Ovary (tissue), 10 donors: ENCODE measurements at regions of chr4 and their contacts with region 1.

Region 1: GRCh38 chr4:83012687-83013419 is 2.2 kb upstream of the LIN54 start:
- DNase-seq: peak; percentile 96 to 99 (median 98)
- H3K4me3 ChIP-seq: peak overlapping the region; percentile 81
- H3K27ac ChIP-seq: peak overlapping the region in 1 of 2 donors; percentile 82
- H3K4me1 ChIP-seq: no peaks in the 10 kb centered on the region
- H3K27me3 ChIP-seq: no peaks in the 10 kb centered on the region
- CTCF ChIP-seq: peak in 2 of 3 donors; percentile 83 to 86
- EP300 ChIP-seq: no peak
- POLR2A ChIP-seq: peak; percentile 27

Region 2: DNA sequence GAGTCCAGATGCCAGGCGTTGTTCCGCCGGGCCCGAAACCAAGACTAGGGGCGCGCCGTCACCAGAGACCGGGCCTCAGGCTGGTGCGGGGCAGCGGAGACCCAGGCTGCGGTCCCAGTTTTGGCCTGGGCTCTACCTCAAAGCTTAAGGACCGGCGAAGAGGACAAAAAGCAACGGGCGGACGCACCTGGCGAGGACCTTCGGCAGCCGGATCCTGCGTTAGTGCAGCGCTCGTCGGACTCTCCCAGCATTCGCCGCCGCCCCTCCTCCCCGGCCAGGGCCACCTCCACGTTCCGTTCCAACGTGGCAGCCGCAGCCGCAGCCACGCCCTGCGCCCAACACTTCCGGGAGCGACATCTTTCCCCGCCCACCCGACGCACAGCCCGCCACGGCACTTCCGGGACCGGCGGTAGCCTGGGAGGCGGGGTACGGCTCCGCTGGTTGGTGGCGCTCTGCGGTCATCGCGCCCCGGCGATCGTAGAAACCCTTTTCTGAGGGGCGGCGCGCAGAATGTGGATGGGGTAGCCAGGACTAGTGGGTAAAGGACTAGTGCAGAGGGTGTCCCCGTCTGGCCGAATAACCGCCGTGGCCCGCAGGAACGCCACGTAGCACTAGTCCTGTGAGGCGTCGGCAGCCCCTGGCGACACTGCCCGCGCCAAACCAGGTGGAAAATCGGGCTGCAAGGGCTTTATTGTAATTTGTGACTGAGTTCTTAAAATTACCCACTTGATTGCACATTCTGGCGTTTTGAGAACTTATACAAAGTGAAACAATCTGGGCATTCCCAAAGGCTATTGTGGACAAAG is 121.7 kb before region 1 on chr4 and contains the start of gene SEC31A:
- intact Hi-C with region 1: loop called in 2 of 4 experiments (anchors 5 to 10 kb)
- DNase-seq: peak; percentile 93 to 97 (median 95)
- H3K4me3 ChIP-seq: peak within 1 kb of the TSS; percentile 76
- H3K27ac ChIP-seq: peak within 1 kb of the TSS; percentile 39 to 93
- H3K4me1 ChIP-seq: peaks cover 12% of the 10 kb centered on the region
- H3K27me3 ChIP-seq: no peaks in the 10 kb centered on the region
- CTCF ChIP-seq: no peak
- EP300 ChIP-seq: no peak
- POLR2A ChIP-seq: peak; percentile 93
- total RNA-seq, gene SEC31A: 175 to 315 (median 287) TPM

Region 3: DNA sequence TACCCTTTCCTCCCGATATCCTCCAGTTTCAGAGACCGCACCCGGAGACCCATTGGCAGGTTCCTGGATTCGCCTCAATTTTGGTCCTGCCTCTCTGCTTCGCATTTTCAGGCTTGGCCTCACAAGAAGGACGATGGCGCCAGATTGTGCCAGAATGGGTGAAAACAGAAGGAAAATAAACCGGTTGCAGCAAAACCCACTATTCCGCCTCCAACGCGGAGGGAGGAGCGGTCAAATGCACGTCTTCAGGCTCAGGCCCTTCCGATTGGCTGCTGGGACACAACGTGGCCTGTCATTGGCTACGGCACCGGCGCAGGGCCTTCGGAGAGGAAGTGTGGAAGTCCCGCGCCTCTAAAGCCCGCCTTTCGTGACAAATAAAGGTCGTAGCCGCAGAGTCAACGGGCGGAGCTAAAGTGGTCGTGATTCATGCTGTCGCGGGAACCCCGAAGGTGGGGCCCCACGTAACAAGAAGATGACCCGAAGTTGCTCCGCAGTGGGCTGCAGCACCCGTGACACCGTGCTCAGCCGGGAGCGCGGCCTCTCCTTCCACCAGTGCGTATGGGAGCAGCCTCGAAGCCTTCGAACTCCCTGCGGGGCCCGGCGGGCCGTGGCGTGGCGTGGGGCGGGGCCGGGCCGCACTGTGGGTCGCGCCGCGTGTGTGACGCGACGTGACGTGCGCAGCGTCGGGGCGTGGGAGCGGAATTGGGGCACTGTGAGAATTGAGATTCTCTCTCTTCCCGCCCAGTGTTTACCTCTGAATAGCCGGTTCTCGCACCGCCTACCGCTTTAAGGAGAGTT is 112.3 kb before region 1 on chr4 and contains the start of gene THAP9:
- intact Hi-C with region 1: loop called in 2 of 4 experiments (anchors 10 kb)
- DNase-seq: peak; percentile 96 to 98 (median 97)
- H3K4me3 ChIP-seq: peak within 1 kb of the TSS; percentile 67
- H3K27ac ChIP-seq: peak within 1 kb of the TSS; percentile 95 to 99
- H3K4me1 ChIP-seq: peaks cover 8% of the 10 kb centered on the region
- H3K27me3 ChIP-seq: no peaks in the 10 kb centered on the region
- CTCF ChIP-seq: no peak
- EP300 ChIP-seq: peak; percentile 6
- POLR2A ChIP-seq: peak; percentile 73
- total RNA-seq, gene THAP9: 3.7 to 9.0 (median 5.7) TPM